ENCODE measurements at regions of chr3 and their contacts with region 1.

Region 1: GRCh38 chr3:141487521-141488252 is 860 bp downstream of the RASA2 start:
- DNase-seq: peak; percentile 68 to 94 (median 84)
- ATAC-seq: peak; percentile 68 to 77
- H3K4me3 Mint-ChIP-seq: peak overlapping the region; percentile 86 to 97 (median 92)
- H3K27ac Mint-ChIP-seq: peak overlapping the region; percentile 86 to 97 (median 96)
- H3K4me1 Mint-ChIP-seq: peaks cover 37 to 81% (median 77%) of the 10 kb centered on the region in 4 donors
- H3K27me3 Mint-ChIP-seq: no peaks in the 10 kb centered on the region

Region 2: GRCh38 chr3:141288336-141288990 is 199.2 kb before region 1 on chr3:
- POLR2A ChIA-PET with region 1: no interaction called
- DNase-seq: no peak
- ATAC-seq: no peak
- H3K4me3 Mint-ChIP-seq: no peak overlapping the region
- H3K27ac Mint-ChIP-seq: peak overlapping the region in 3 of 10 donors; percentile 8 to 68 (median 13)
- H3K4me1 Mint-ChIP-seq: peaks cover 3 to 11% (median 5%) of the 10 kb centered on the region in 4 donors
- H3K27me3 Mint-ChIP-seq: no peaks in the 10 kb centered on the region

Region 3: DNA sequence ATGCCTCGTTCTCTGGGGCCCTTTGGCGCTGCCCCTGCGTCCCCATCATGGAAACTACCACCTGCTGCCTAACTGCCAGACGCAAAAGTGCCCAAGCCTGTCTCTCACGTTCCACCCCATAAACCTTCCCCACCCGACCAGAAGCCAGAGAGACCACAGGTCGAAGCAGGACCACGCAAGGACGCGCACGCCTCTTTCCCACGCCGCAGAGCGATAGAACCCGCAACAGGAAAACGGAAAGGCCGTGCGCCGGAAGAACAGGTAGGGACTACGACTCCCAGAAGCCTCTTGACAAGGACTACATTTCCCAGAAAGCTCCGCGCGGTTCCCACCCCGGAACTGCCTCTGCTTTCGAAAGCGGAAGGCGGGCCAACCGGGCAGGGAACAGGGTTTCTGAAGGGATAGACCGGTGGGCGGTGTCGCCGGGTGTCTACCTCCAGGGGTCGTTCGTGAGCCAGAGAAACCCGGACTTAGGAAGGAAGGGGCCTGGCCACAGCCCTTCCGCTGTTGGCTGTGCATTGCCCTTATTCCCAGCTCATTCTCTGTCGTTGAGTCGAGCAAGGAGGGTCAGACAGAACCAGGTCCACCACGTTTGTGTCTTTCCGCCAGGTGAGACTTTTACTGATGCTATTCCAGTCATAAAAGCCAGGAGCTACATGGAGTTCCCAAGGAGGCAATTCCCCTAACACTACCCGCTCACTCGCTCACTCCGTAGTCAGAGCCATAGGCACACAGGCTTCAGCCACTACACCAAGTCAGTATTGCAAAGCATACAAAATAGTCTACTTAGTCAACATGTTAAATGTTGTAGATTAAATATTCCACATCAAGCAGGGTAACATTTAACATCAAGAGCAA is 176.0 kb before region 1 on chr3:
- POLR2A ChIA-PET with region 1: interaction called, 13 read pairs
- DNase-seq: peak; percentile 90 to 99 (median 97)
- ATAC-seq: peak; percentile 90 to 91
- H3K4me3 Mint-ChIP-seq: peak overlapping the region; percentile 96 to 99 (median 98)
- H3K27ac Mint-ChIP-seq: peak overlapping the region; percentile 95 to 99 (median 98)
- H3K4me1 Mint-ChIP-seq: peaks cover 25 to 66% (median 56%) of the 10 kb centered on the region in 4 donors
- H3K27me3 Mint-ChIP-seq: no peaks in the 10 kb centered on the region

Region 4: GRCh38 chr3:141498598-141499223 is 11.0 kb after region 1 on chr3:
- POLR2A ChIA-PET with region 1: interaction called, 113 read pairs
- DNase-seq: peak; percentile 57 to 96 (median 90)
- ATAC-seq: peak; percentile 85 to 93
- H3K4me3 Mint-ChIP-seq: peak overlapping the region; percentile 68 to 87 (median 80)
- H3K27ac Mint-ChIP-seq: peak overlapping the region in 5 of 10 donors; percentile 95 to 98 (median 97)
- H3K4me1 Mint-ChIP-seq: peaks cover 29 to 73% (median 59%) of the 10 kb centered on the region in 4 donors
- H3K27me3 Mint-ChIP-seq: no peaks in the 10 kb centered on the region

Region 5: GRCh38 chr3:141519587-141519986 is 31.9 kb after region 1 on chr3:
- POLR2A ChIA-PET with region 1: interaction called, 20 read pairs
- DNase-seq: no peak
- ATAC-seq: no peak
- H3K4me3 Mint-ChIP-seq: peak overlapping the region in 2 of 10 donors; percentile 30 to 39
- H3K27ac Mint-ChIP-seq: peak overlapping the region in 9 of 10 donors; percentile 2 to 70 (median 46)
- H3K4me1 Mint-ChIP-seq: peaks cover 24 to 61% (median 47%) of the 10 kb centered on the region in 4 donors
- H3K27me3 Mint-ChIP-seq: no peaks in the 10 kb centered on the region

Region 6: DNA sequence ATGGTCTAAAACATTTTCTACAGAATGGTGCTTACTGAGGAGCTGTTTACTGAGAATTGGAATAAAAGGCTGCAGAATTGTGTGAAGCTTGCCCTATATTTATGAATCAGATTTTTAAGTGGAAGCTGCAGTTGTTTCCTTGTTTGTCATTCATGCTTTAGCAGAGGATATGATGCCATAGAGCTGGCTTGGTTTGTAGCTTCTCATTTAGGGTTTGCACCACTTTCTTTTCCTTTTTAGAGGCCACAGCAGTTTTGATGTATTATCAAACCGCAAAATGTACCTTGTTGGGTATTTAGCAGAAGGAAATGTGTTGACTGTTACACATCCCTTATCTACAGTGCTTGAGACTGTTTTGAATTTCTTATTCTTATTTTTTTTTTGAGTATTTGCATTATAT is 65.4 kb after region 1 on chr3:
- POLR2A ChIA-PET with region 1: interaction called, 42 read pairs
- DNase-seq: peak in 6 of 10 donors; percentile 21 to 85 (median 60)
- ATAC-seq: peak; percentile 81 to 93
- H3K4me3 Mint-ChIP-seq: peak overlapping the region; percentile 27 to 71 (median 53)
- H3K27ac Mint-ChIP-seq: peak overlapping the region; percentile 21 to 90 (median 84)
- H3K4me1 Mint-ChIP-seq: peaks cover 19 to 62% (median 59%) of the 10 kb centered on the region in 4 donors
- H3K27me3 Mint-ChIP-seq: no peaks in the 10 kb centered on the region

Region 7: DNA sequence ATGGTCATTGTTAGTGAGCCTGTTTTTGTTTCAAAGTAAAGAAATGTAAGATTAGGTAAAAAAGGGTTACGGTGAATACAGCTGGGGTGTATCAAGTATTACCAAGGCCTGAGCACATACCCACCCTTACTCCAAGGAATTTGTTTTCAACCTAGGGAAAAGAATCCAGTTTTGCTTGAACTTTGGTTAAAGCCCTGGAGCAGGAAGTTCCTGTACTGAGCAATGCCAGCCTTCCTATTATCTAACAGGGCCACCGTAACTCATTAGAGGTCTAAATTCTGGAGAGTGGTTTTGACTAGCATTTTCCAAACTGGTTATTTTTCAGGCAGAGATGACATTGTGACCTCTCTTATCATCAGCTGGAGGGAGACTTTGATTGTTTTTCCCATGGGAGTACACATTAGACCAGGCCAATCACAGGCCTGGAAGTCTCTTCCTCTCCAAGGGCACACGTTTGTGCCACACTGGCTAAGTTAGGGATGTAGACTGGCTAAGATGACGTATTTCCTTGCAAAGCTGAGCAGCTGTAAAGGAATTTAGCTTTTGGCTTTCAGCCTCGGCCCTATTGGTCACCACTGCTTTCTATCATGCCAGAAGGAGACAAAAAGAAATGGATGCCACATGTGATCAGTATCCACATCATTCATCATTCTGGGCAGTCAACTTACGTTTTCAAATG is 223.0 kb after region 1 on chr3:
- POLR2A ChIA-PET with region 1: no interaction called
- DNase-seq: no peak
- ATAC-seq: no peak
- H3K4me3 Mint-ChIP-seq: no peak overlapping the region
- H3K27ac Mint-ChIP-seq: no peak overlapping the region
- H3K4me1 Mint-ChIP-seq: no peaks in the 10 kb centered on the region
- H3K27me3 Mint-ChIP-seq: no peaks in the 10 kb centered on the region